HepG2 (cell line): ENCODE measurements at regions of chr9 and their contacts with region 1.

Region 1: GRCh38 chr9:87497604-87498045 is at the start of gene DAPK1:
- DNase-seq: peak; percentile 55
- ATAC-seq: peak; percentile 87
- H3K4me3 ChIP-seq: peak within 1 kb of the TSS; percentile 79 to 87 (median 85)
- H3K27ac ChIP-seq: peak within 1 kb of the TSS; percentile 86
- H3K4me1 ChIP-seq: peaks cover 50% of the 10 kb centered on the region
- H3K27me3 ChIP-seq: peaks cover 4 to 5% of the 10 kb centered on the region in 2 experiments; a peak in 2 of 5 replicates
- CTCF ChIP-seq: peak; percentile 61
- EP300 ChIP-seq: no peak
- POLR2A ChIP-seq: peak; percentile 49 to 72; a peak in 3 of 4 replicates
- RAD21 ChIP-seq: peak; percentile 24; the same call in 1 of the 2 replicates
- total RNA-seq, gene DAPK1: 34.0 and 35.9 TPM in 2 replicates

Region 2: GRCh38 chr9:87336914-87337333 is 160.7 kb before region 1 on chr9:
- CTCF ChIA-PET with region 1: no interaction called
- POLR2A ChIA-PET with region 1: no interaction called
- in situ Hi-C with region 1: loop called (anchors 10 kb)
- intact Hi-C with region 1: loop called (anchors 1 kb)
- DNase-seq: peak; percentile 75
- ATAC-seq: peak; percentile 87
- H3K4me3 ChIP-seq: peak overlapping the region in 1 of 3 experiments; percentile 45; a peak in 2 of 6 replicates
- H3K27ac ChIP-seq: no peak overlapping the region
- H3K4me1 ChIP-seq: peaks cover 9% of the 10 kb centered on the region
- H3K27me3 ChIP-seq: peaks cover 0 to 18% of the 10 kb centered on the region in 2 experiments; a peak in 3 of 5 replicates
- CTCF ChIP-seq: peak; percentile 72
- EP300 ChIP-seq: no peak
- POLR2A ChIP-seq: no peak
- RAD21 ChIP-seq: peak; percentile 60

Region 3: DNA sequence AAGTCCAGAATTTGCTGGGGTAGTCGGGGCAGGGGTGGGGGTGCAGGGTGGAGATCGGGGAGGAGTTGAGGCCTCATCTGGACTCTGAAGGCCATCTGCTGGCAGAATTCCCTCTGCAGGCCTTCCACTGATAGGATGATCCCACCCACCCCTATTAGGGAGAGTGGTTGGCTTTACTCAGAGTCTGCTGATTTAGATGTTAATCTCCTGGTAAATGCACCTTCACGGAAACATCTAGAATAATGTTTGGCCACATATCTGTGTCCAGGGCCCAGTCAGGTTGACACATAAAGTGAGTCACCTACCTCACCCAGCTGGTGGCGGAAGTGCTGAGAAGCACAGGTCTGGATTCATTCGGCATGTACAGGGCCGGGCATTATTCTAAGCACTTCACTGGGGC is 50.0 kb after region 1 on chr9:
- CTCF ChIA-PET with region 1: no interaction called
- POLR2A ChIA-PET with region 1: no interaction called
- in situ Hi-C with region 1: no loop called
- intact Hi-C with region 1: loop called (anchors 2 kb)
- DNase-seq: peak; percentile 12
- ATAC-seq: peak; percentile 55
- H3K4me3 ChIP-seq: no peak overlapping the region
- H3K27ac ChIP-seq: no peak overlapping the region
- H3K4me1 ChIP-seq: peaks cover 31% of the 10 kb centered on the region
- H3K27me3 ChIP-seq: no peaks in the 10 kb centered on the region
- CTCF ChIP-seq: peak; percentile 30
- EP300 ChIP-seq: no peak
- POLR2A ChIP-seq: no peak
- RAD21 ChIP-seq: no peak

Region 4: DNA sequence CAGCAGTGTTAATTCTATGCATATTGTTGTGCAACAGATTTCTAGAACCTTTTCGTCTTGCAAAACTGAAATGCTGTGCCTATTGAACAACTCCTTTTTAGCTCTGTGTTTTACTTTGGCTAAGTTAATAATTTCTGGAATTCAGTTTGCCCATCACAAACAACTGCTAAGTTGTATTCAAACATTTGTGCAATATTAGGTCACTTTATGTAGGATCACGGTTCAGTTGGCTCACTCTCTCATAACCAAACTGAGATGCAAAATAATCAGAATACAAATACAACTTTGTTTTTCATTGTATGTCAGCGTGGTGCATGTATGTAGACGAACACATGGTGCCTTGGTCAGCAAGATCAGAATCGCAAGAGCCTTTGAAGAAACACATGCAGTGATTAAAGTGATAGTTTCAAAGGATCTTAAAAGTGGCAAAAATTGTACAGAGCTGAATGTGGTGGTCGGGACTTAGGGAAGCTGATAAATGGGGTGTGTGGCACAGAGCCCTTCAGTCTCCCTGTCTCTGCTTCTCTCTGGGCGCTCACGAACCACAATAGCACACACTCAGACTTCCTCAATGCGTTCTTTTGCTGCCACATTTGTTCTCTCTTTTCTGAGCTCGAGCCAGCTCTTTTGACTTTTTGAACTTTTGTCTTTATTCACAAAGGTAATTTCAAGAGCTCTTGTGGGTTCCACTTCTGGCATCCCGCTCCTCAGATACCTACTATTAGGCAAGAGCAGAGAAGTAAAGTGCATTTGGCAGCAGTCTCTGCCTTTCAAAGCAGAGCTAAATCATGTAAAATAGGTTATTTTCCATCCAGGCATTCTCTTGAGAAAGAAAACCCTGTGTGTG is 115.9 kb after region 1 on chr9:
- CTCF ChIA-PET with region 1: no interaction called
- POLR2A ChIA-PET with region 1: interaction called, 28 read pairs
- in situ Hi-C with region 1: no loop called
- intact Hi-C with region 1: loop called (anchors 5 kb)
- DNase-seq: peak; percentile 96
- ATAC-seq: peak; percentile 93
- H3K4me3 ChIP-seq: peak overlapping the region in 2 of 3 experiments; percentile 0 to 41; a peak in 2 of 6 replicates
- H3K27ac ChIP-seq: peak overlapping the region; percentile 93
- H3K4me1 ChIP-seq: peaks cover 61% of the 10 kb centered on the region
- H3K27me3 ChIP-seq: no peaks in the 10 kb centered on the region
- CTCF ChIP-seq: no peak
- EP300 ChIP-seq: peak in 1 of 2 experiments; percentile 93; a peak in 2 of 4 replicates
- POLR2A ChIP-seq: 0 out of 4 replicates have a peak, but pooled peaks of 1 of the 2 experiments have one; percentile 38
- RAD21 ChIP-seq: no peak

Region 5: DNA sequence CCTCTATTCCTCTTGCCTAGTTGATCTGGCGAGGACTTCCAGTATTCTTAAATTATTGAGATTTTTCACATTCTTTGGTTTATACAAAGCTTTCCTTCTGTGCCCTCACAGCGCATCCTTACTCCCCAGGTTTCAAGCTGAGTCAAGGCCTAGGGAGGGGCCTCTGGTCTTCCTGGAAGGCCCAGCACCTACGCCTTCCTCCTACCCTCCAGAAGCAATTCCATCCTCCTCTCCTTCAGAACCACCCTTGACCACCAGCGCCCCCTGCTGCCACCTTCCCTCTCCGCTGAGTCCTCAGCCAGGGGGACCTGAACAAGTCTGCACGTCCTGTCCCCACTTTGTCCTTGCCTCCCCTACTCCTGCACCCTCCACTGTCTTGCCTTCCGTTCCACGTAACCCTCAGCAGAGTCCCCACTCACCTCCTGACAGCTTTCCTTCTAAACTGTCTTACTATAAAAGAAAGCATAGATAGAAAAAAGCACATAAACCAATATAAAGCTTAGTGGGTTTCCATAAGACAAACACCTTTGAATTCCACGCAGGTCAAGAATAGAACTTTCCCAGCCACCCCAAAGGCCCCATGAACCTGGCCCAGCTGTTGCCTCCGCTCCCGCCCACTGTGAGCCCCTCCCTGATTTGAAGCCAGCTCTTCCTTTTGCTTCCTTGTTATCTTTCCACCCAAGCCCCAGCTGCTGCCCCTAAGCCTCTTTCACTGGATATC is 165.3 kb after region 1 on chr9:
- CTCF ChIA-PET with region 1: interaction called, 3 read pairs
- POLR2A ChIA-PET with region 1: no interaction called
- in situ Hi-C with region 1: loop called (anchors 10 kb)
- intact Hi-C with region 1: loop called (anchors 5 kb)
- DNase-seq: peak; percentile 41
- ATAC-seq: peak; percentile 88
- H3K4me3 ChIP-seq: no peak overlapping the region
- H3K27ac ChIP-seq: no peak overlapping the region
- H3K4me1 ChIP-seq: no peaks in the 10 kb centered on the region
- H3K27me3 ChIP-seq: no peaks in the 10 kb centered on the region
- CTCF ChIP-seq: peak; percentile 95
- EP300 ChIP-seq: no peak
- POLR2A ChIP-seq: no peak
- RAD21 ChIP-seq: peak; percentile 86